T-cell (primary cell): ENCODE measurements at regions of chr11 and their contacts with region 1.

Region 1: GRCh38 chr11:66810576-66811185 is 32.6 kb upstream of the RCE1 start:
- DNase-seq: no peak
- ATAC-seq: no peak
- H3K4me3 ChIP-seq: no peak overlapping the region
- H3K4me3 Mint-ChIP-seq: no peak overlapping the region
- H3K27ac ChIP-seq: no peak overlapping the region
- H3K27ac Mint-ChIP-seq: no peak overlapping the region
- H3K4me1 ChIP-seq: no peaks in the 10 kb centered on the region
- H3K4me1 Mint-ChIP-seq: no peaks in the 10 kb centered on the region
- H3K27me3 ChIP-seq: no peaks in the 10 kb centered on the region
- H3K27me3 Mint-ChIP-seq: no peaks in the 10 kb centered on the region

Region 2: GRCh38 chr11:66195867-66196266 is 614.8 kb before region 1 on chr11:
- CTCF ChIA-PET with region 1: no interaction called
- POLR2A ChIA-PET with region 1: interaction called in 1 of 2 experiments, 12 read pairs
- DNase-seq: no peak
- ATAC-seq: no peak
- H3K4me3 ChIP-seq: no peak overlapping the region
- H3K4me3 Mint-ChIP-seq: no peak overlapping the region
- H3K27ac ChIP-seq: no peak overlapping the region
- H3K27ac Mint-ChIP-seq: no peak overlapping the region
- H3K4me1 ChIP-seq: peaks cover 0 to 3% of the 10 kb centered on the region in 2 experiments
- H3K4me1 Mint-ChIP-seq: peaks cover 0 to 7% (median 5%) of the 10 kb centered on the region in 3 donors
- H3K27me3 ChIP-seq: no peaks in the 10 kb centered on the region
- H3K27me3 Mint-ChIP-seq: no peaks in the 10 kb centered on the region

Region 3: DNA sequence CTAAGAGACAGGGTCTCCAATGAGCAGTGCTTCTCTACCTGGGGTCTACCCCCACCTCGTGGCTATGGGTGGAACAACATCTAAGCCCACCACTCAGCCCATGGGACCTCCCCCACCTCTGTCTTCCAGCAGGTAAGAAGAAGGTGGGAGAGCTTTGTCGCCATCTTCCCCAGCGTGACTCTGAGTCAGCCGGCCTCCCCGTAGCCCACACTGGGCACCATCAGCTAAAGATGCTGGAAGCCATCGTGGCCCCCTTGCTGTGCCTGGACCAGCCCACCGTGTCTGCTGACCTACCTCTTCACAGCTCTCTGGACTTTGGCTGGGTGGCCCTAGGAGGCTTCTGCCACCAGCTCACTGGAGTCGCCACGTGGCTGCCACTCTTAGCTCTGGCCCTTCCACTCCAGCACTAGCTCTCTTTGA is 165.4 kb after region 1 on chr11:
- CTCF ChIA-PET with region 1: no interaction called
- POLR2A ChIA-PET with region 1: no interaction called
- DNase-seq: peak in 8 of 35 experiments; percentile 9 to 36 (median 10)
- ATAC-seq: peak in 1 of 4 experiments; percentile 40
- H3K4me3 ChIP-seq: no peak overlapping the region
- H3K4me3 Mint-ChIP-seq: no peak overlapping the region
- H3K27ac ChIP-seq: no peak overlapping the region
- H3K27ac Mint-ChIP-seq: no peak overlapping the region
- H3K4me1 ChIP-seq: no peaks in the 10 kb centered on the region
- H3K4me1 Mint-ChIP-seq: no peaks in the 10 kb centered on the region
- H3K27me3 ChIP-seq: peaks cover 0 to 31% of the 10 kb centered on the region in 2 experiments
- H3K27me3 Mint-ChIP-seq: peaks cover 3 to 12% of the 10 kb centered on the region in 2 donors

Region 4: GRCh38 chr11:67248653-67249052 is 438.0 kb after region 1 on chr11:
- CTCF ChIA-PET with region 1: no interaction called
- POLR2A ChIA-PET with region 1: no interaction called
- DNase-seq: no peak
- ATAC-seq: no peak
- H3K4me3 ChIP-seq: no peak overlapping the region
- H3K4me3 Mint-ChIP-seq: no peak overlapping the region
- H3K27ac ChIP-seq: no peak overlapping the region
- H3K27ac Mint-ChIP-seq: peak overlapping the region; percentile 27 to 55
- H3K4me1 ChIP-seq: peaks cover 0 to 18% of the 10 kb centered on the region in 2 experiments
- H3K4me1 Mint-ChIP-seq: peaks cover 63 to 73% (median 67%) of the 10 kb centered on the region in 3 donors
- H3K27me3 ChIP-seq: no peaks in the 10 kb centered on the region
- H3K27me3 Mint-ChIP-seq: no peaks in the 10 kb centered on the region